ENCODE measurements at regions of chr2 and their contacts with region 1.

Region 1: GRCh38 chr2:55419679-55420438 is at the start of gene CCDC88A:
- DNase-seq: peak; percentile 94 to 98
- H3K4me3 ChIP-seq: peak within 1 kb of the TSS; percentile 72 to 94
- H3K27ac ChIP-seq: peak within 1 kb of the TSS; percentile 85 to 94
- H3K4me1 ChIP-seq: peaks cover 0 to 32% (median 11%) of the 10 kb centered on the region in 4 donors
- H3K27me3 ChIP-seq: no peaks in the 10 kb centered on the region
- CTCF ChIP-seq: peak; percentile 35 to 46

Region 2: GRCh38 chr2:55232084-55232862 is 187.6 kb before region 1 on chr2 and contains the starts of genes CLHC1 and RPS27A:
- intact Hi-C with region 1: loop called (anchors 10 kb)
- DNase-seq: peak; percentile 86 to 93
- H3K4me3 ChIP-seq: peak within 1 kb of the TSS; percentile 64 to 84
- H3K27ac ChIP-seq: peak within 1 kb of the TSS; percentile 87 to 91
- H3K4me1 ChIP-seq: peaks cover 0 to 29% (median 20%) of the 10 kb centered on the region in 4 donors
- H3K27me3 ChIP-seq: no peaks in the 10 kb centered on the region
- CTCF ChIP-seq: peak in 1 of 2 experiments; percentile 17

Region 3: GRCh38 chr2:55361465-55362189 is 58.2 kb before region 1 on chr2:
- intact Hi-C with region 1: loop called (anchors 2 kb)
- DNase-seq: no peak
- H3K4me3 ChIP-seq: no peak overlapping the region
- H3K27ac ChIP-seq: peak overlapping the region in 1 of 2 donors; percentile 21
- H3K4me1 ChIP-seq: peaks cover 0 to 31% (median 7%) of the 10 kb centered on the region in 4 donors
- H3K27me3 ChIP-seq: no peaks in the 10 kb centered on the region
- CTCF ChIP-seq: no peak